Activated CD4-positive, alpha-beta T cell treated with anti-CD3 and anti-CD28 coated beads, Interleukin-2, amount 10 ng/mL, durations not matched to agents 7 days and 5 days (primary cell): ENCODE measurements at regions of chr19 and their contacts with region 1.

Region 1: GRCh38 chr19:21851596-21852345 is 15.8 kb upstream of the ZNF43 start:
- DNase-seq: peak; percentile 92
- H3K4me3 Mint-ChIP-seq: peak overlapping the region; percentile 90
- H3K27ac Mint-ChIP-seq: peak overlapping the region; percentile 95
- H3K4me1 Mint-ChIP-seq: peaks cover 22% of the 10 kb centered on the region
- H3K27me3 Mint-ChIP-seq: no peaks in the 10 kb centered on the region

Region 2: DNA sequence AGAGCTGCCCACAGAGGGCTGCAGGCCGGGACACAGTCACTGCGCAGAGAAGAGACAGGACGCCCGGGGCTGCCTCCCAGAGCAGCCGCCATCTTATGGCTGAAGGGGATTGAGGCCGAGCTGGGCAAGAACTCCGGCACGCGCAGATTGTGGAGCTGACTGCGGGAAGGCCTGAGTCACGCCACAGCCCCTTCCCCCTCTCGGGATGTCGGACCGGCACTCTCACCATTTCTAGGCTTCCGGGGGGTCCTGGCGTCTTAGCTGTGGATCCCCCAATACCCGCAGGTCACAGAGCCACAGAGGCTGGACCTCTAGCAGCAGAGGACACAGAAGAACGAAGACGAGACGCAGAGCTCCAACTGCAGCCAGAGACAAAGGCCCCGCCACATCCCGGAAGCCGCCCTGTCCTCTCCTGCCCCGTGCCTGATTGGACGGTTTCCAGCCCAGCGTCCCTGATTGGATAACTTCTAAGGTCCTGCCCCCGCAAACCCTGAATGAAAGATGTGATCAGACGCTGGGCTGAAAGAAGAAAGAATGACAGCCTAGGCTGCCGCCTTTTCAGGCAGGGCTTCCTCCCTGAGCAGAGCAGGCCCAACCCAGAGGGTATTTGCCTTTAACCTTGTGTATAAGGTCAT is 15.8 kb before region 1 on chr19 and contains the start of gene ZNF43:
- CTCF ChIA-PET with region 1: interaction called, 20 read pairs
- POLR2A ChIA-PET with region 1: interaction called, 23 read pairs
- DNase-seq: peak; percentile 96
- H3K4me3 Mint-ChIP-seq: peak within 1 kb of the TSS; percentile 98
- H3K27ac Mint-ChIP-seq: peak within 1 kb of the TSS; percentile 99
- H3K4me1 Mint-ChIP-seq: peaks cover 23% of the 10 kb centered on the region
- H3K27me3 Mint-ChIP-seq: no peaks in the 10 kb centered on the region
- total RNA-seq, gene ZNF43: 29.6 to 34.6 TPM